PC-3 (cell line): ENCODE measurements at regions of chr5 and their contacts with region 1.

Region 1: GRCh38 chr5:20572614-20573013 is 584.6 kb upstream of the CDH18 start:
- DNase-seq: peak; percentile 93
- ATAC-seq: peak; percentile 98
- H3K4me3 ChIP-seq: no peak overlapping the region
- H3K27ac ChIP-seq: no peak overlapping the region
- H3K4me1 ChIP-seq: peaks cover 16% of the 10 kb centered on the region
- H3K27me3 ChIP-seq: no peaks in the 10 kb centered on the region
- CTCF ChIP-seq: peak; percentile 69

Region 2: DNA sequence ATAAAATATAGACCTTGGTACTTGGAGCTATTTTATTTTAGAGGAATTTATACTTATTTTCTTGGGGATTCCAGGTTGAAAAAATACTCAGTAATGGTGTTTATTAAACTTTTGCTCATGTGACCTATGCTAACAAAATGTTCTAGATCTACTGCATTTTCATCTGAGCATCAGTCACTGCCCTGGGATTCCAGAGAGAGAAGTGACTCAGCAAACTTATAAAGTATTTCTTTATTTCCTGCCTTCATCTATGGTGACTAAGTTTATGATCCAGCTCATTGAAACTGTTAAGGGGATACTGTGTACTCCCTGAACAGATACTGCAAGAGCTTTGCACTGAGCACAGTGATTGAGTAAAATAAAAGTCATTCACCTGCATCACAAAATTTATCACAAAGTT is 286.1 kb before region 1 on chr5:
- CTCF ChIA-PET with region 1: no interaction called
- POLR2A ChIA-PET with region 1: no interaction called
- intact Hi-C with region 1: loop called (anchors 5 kb)
- DNase-seq: peak; percentile 93
- ATAC-seq: peak; percentile 100
- H3K4me3 ChIP-seq: no peak overlapping the region
- H3K27ac ChIP-seq: peak overlapping the region; percentile 58
- H3K4me1 ChIP-seq: peaks cover 27% of the 10 kb centered on the region
- H3K27me3 ChIP-seq: no peaks in the 10 kb centered on the region
- CTCF ChIP-seq: no peak